ENCODE measurements at regions of chr3 and their contacts with region 1.

Region 1: DNA sequence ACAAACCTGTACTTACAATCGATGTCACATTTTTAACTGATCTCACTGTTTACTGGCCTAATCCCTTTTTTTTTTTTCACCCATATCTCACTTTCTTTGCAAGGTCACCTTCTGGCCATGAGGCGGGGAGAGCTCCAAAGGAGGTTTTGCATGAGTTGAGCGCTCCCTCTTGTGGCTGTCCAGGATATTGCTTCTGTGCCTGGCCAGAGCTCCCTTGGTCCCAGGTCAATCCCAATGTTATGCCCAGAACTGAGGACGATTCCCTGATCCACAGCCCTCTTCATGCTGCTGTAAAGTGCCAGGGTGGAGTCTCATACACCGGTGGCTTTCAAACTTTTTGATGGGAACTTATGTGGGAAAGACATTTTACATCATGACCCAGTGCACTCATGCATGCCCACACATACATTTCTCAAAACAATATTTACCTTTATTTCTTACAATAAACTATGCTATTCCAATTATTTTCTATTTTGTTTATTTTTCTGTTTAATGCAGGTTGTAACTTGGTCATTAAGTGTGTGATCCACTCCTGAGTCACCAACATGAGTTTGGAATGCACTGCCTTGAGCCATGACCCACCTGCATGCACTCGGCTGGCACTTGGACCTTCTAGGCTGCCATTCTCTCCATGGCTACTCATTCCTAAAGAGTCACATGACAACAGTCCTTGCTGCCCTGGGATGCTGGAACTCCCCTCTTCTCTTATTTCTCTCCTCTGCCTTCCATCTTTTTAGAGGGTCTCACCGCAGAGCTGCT is 9.6 kb upstream of the SST start:
- H3K4me3 ChIP-seq: no peak overlapping the region
- H3K27ac ChIP-seq: no peak overlapping the region
- H3K4me1 ChIP-seq: no peaks in the 10 kb centered on the region
- CTCF ChIP-seq: peak; percentile 81

Region 2: GRCh38 chr3:187281191-187281714 is 398.6 kb before region 1 on chr3:
- CTCF ChIA-PET with region 1: no interaction called
- POLR2A ChIA-PET with region 1: no interaction called
- H3K4me3 ChIP-seq: no peak overlapping the region
- H3K27ac ChIP-seq: no peak overlapping the region
- H3K4me1 ChIP-seq: no peaks in the 10 kb centered on the region
- CTCF ChIP-seq: no peak

Region 3: DNA sequence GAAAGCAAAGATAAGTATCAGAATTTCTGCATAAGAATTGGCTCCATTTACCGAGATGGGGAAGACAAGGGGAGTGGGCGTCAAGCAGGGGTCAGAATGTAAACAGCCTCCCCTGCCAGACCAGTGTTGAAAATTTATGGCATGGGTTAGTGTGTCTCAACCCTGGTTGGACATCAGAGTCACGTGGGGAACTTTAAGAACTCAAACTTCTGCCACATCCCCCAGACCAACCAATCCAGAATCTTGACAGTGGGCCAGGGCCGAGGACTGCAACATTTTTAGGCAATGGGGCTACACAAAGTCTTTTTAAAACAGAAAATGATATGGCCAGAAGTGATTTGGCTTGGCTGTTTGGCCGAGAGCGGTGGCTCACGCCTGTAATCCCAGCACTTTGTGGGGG is 373.9 kb before region 1 on chr3:
- CTCF ChIA-PET with region 1: interaction called, 11 read pairs
- POLR2A ChIA-PET with region 1: no interaction called
- H3K4me3 ChIP-seq: no peak overlapping the region
- H3K27ac ChIP-seq: no peak overlapping the region
- H3K4me1 ChIP-seq: no peaks in the 10 kb centered on the region
- CTCF ChIP-seq: no peak

Region 4: DNA sequence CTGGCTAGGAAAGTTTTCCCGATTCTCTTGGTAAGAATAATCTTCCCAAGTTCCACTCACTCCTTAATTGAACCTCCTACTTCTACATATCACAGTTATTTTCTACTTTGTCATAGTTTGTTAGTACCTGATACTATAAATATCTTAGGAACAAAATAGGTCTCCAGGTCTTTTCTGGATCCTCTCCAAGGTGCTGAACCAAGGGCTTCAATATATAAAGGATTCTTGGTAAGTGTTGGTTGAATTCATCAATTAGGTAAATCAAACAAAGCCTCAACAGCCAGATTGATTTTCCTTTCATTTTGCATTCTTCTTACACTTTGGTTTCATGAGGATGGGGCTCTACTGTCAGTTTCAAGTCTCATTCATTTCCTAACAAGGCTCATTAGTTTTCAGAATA is 339.2 kb before region 1 on chr3:
- CTCF ChIA-PET with region 1: interaction called, 11 read pairs
- POLR2A ChIA-PET with region 1: no interaction called
- H3K4me3 ChIP-seq: no peak overlapping the region
- H3K27ac ChIP-seq: no peak overlapping the region
- H3K4me1 ChIP-seq: no peaks in the 10 kb centered on the region
- CTCF ChIP-seq: no peak

Region 5: GRCh38 chr3:187545391-187545790 is 134.4 kb before region 1 on chr3:
- CTCF ChIA-PET with region 1: no interaction called
- POLR2A ChIA-PET with region 1: no interaction called
- H3K4me3 ChIP-seq: no peak overlapping the region
- H3K27ac ChIP-seq: no peak overlapping the region
- H3K4me1 ChIP-seq: no peaks in the 10 kb centered on the region
- CTCF ChIP-seq: no peak

Region 6: GRCh38 chr3:187689984-187690383 is 10.2 kb after region 1 on chr3:
- CTCF ChIA-PET with region 1: interaction called, 28 read pairs
- POLR2A ChIA-PET with region 1: no interaction called
- H3K4me3 ChIP-seq: no peak overlapping the region
- H3K27ac ChIP-seq: no peak overlapping the region
- H3K4me1 ChIP-seq: no peaks in the 10 kb centered on the region
- CTCF ChIP-seq: no peak

Region 7: DNA sequence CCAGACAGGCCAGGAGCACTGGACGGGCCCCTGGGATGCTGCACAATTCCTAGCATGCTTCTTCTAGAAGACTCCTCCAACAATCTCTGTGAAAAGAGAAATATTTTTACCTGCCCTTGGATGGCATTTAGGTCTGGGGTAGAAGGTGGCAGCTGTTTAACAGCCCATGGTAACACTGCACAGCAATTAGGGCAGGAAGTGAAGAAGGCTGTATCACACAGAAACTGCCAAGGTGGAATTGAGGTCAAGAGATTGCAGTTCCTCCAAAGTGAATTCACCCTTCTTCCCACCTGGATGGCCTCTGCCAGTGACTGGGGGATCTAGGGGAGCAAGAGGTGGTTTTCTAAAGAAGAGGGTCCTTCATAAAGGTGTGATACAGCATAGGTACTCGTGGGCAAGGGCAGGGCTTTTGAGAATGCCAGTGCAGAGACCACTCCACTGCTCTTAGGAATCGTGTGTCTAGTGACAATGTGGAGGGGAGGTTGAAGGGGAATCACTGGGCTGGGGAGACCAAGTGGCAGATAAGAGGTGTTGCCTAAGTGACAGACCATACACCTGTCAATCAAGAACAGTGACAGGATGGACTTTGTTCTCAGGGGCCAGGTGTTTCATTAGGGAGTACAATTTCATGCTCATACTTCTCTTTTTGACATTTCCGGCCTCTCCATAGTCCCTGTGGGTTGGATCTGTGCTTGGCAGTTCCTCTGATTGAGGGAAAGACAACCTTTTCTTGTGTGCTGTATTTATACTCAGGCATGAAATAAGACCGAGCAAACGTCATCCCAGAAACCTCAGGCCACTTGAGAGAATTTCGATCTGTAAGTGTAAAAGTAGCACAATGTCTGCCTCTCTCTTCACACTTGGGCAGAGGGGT is 149.0 kb after region 1 on chr3:
- CTCF ChIA-PET with region 1: no interaction called
- POLR2A ChIA-PET with region 1: no interaction called
- H3K4me3 ChIP-seq: no peak overlapping the region
- H3K27ac ChIP-seq: no peak overlapping the region
- H3K4me1 ChIP-seq: no peaks in the 10 kb centered on the region
- CTCF ChIP-seq: no peak

Measured in HEK293 (cell line).